ENCODE measurements at regions of chr16 and their contacts with region 1.

Region 1: DNA sequence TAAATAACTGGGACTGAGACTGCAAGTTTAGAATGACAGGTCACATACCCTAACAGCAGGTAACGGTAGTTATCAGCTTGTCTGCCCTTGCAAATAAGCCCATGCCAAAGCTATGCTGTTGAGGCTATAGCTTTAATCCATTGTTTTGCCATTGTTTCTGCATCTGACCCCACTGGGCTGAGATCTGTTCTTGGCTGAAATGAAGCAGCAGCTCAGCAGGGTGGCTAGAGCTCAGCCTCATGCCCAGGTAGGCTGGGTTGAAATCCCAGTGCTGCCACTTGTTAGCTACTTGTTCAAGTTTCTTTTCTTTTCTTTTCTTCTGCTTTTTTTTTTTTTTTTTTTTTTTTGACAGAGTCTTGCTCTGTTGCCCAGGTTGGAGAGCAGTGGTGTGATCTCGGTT is 40.1 kb downstream of the NKD1 start:
- DNase-seq: no peak
- H3K4me3 ChIP-seq: peak overlapping the region in 1 of 3 experiments; percentile 51
- H3K4me3 Mint-ChIP-seq: no peak overlapping the region
- H3K27ac ChIP-seq: peak overlapping the region; percentile 71 to 85
- H3K27ac Mint-ChIP-seq: peak overlapping the region; percentile 90 to 95 (median 93)
- H3K4me1 ChIP-seq: peaks cover 15 to 18% of the 10 kb centered on the region in 2 donors
- H3K4me1 Mint-ChIP-seq: peaks cover 27% of the 10 kb centered on the region
- H3K27me3 ChIP-seq: no peaks in the 10 kb centered on the region
- H3K27me3 Mint-ChIP-seq: peaks cover 2 to 4% (median 3%) of the 10 kb centered on the region in 3 donors
- CTCF ChIP-seq: no peak

Region 2: DNA sequence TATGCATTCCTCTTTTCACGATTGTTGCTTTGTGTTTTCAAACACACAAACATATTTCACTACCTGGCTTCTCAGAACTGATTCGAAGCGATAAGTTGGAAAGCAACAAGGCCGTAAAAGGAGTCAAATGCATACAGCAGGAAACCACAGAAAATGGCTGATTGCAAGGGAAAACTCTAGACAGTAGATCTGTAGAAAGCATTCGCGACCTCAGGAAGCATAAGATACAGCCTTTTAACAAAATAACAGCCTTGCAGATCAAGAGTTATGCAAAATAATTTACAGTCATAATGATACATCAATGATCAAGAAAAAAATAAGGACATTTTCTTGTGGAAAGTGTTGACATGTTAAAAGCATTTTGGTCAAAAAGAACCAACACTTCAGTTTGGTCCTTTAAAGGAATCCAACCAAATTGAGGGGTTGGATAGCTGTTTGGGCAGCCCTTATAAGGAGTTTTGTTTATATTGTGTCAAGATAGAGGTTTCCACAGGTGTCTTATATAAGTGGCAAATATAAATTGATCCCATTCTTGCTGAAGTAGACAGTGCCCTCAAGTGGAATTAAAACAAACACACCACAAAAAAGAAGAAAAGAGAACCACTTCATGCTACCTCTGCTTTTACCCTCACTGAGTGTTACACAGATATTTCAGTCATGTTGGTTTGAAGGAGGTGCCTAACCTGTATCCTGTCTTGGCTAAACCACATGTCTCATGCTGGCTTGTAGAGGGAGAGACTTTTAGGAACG is 159.1 kb after region 1 on chr16:
- intact Hi-C with region 1: loop called in 1 of 2 experiments (anchors 2 kb)
- DNase-seq: peak; percentile 23 to 33 (median 32)
- H3K4me3 ChIP-seq: no peak overlapping the region
- H3K4me3 Mint-ChIP-seq: no peak overlapping the region
- H3K27ac ChIP-seq: peak overlapping the region in 1 of 2 donors; percentile 2
- H3K27ac Mint-ChIP-seq: peak overlapping the region in 3 of 7 donors; percentile 8 to 50 (median 46)
- H3K4me1 ChIP-seq: peaks cover 19 to 45% of the 10 kb centered on the region in 2 donors
- H3K4me1 Mint-ChIP-seq: peaks cover 51% of the 10 kb centered on the region
- H3K27me3 ChIP-seq: no peaks in the 10 kb centered on the region
- H3K27me3 Mint-ChIP-seq: no peaks in the 10 kb centered on the region
- CTCF ChIP-seq: peak; percentile 66

Measured in CD14-positive monocyte (primary cell).